ENCODE measurements at regions of chr7 and their contacts with region 1.

Region 1: GRCh38 chr7:97027427-97028234 is 3.0 kb upstream of the DLX5 start:
- DNase-seq: no peak
- H3K4me3 ChIP-seq: peak overlapping the region; percentile 29 to 43
- H3K27ac ChIP-seq: no peak overlapping the region
- H3K4me1 ChIP-seq: peaks cover 36% of the 10 kb centered on the region
- H3K27me3 ChIP-seq: no peaks in the 10 kb centered on the region
- CTCF ChIP-seq: peak; percentile 57 to 83 (median 73)
- POLR2A ChIP-seq: no peak

Region 2: DNA sequence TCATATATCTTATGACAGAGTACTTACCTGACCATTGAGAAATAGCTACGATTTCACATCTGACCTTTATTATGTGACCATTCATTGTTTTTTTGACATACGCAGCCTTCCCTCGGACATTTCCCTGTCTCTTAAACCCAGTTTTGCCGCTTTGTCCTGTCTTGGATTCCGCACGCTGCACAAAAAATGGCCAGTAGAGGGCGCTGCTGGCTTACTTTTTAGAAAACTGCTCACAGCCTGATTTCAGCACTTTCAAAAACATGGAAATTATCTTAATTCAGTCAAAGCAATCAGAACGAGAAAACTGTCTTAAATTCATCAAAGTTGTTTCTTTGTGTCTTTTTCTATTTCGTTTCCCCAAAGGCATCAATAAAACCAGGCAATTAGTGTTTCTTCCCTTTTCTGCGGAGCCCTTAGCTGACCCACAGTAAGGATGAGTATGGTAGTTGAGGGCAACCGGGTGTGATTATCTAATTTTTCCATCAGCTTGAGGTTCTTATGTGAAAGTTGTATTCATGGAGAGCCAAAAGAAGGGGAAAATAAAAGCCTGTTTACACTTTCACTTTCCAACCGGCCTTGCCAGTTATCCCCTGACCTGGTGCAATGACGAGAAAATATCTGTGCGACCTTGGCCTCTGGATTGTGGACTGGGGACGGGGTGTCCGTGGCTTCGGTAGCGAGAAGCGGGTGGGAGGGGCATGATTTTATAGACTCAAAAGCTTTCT is 1110.9 kb before region 1 on chr7:
- intact Hi-C with region 1: loop called (anchors 10 kb)
- DNase-seq: no peak
- H3K4me3 ChIP-seq: no peak overlapping the region
- H3K27ac ChIP-seq: no peak overlapping the region
- H3K4me1 ChIP-seq: no peaks in the 10 kb centered on the region
- H3K27me3 ChIP-seq: no peaks in the 10 kb centered on the region
- CTCF ChIP-seq: peak; percentile 80 to 83 (median 82)
- POLR2A ChIP-seq: no peak

Region 3: DNA sequence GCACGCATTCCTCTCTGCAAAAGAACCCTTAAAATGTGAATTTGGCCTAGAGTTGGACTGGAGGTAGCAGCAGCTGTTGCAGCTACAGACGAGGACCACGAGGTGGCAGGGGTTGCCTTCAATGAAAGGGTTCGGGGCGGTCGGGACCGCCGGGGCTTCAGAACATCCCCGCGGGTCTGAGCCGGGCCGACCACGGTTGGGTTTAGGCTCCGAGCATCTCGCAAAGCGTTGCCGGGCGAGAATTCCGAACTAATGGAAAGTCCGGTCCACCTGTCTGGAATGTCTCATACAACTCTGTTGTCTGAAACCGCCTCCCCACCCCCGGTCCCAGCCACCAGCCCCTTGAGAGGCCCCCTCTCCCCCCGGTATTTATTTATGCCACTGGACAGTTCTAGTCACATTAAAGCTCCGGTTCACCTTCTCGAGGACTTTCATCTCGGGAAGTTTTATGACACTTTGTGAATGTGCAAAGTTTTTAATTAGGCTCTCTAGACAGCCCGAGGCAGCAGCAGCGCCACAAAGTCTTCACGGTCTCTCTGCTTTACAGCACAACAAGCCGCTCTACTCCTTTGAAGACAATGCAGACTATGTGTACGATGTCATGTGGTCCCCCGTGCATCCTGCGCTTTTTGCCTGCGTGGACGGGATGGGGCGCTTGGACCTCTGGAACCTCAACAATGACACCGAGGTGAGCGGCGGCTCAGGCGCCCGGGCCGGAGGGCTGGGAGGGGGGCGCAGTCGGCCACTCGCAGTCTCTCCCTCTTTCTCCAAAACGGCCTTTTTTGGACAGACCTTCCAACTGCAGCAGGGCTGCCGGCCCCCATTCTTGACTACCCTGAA is 951.9 kb before region 1 on chr7:
- intact Hi-C with region 1: loop called (anchors 10 kb)
- DNase-seq: peak in 1 of 2 donors; percentile 85
- H3K4me3 ChIP-seq: peak overlapping the region; percentile 45 to 58
- H3K27ac ChIP-seq: no peak overlapping the region
- H3K4me1 ChIP-seq: peaks cover 10% of the 10 kb centered on the region
- H3K27me3 ChIP-seq: no peaks in the 10 kb centered on the region
- CTCF ChIP-seq: peak; percentile 43 to 79 (median 65)
- POLR2A ChIP-seq: no peak

Measured in vagina (tissue), 2 donors.